IMR-90 (cell line): ENCODE measurements at regions of chr11 and their contacts with region 1.

Region 1: DNA sequence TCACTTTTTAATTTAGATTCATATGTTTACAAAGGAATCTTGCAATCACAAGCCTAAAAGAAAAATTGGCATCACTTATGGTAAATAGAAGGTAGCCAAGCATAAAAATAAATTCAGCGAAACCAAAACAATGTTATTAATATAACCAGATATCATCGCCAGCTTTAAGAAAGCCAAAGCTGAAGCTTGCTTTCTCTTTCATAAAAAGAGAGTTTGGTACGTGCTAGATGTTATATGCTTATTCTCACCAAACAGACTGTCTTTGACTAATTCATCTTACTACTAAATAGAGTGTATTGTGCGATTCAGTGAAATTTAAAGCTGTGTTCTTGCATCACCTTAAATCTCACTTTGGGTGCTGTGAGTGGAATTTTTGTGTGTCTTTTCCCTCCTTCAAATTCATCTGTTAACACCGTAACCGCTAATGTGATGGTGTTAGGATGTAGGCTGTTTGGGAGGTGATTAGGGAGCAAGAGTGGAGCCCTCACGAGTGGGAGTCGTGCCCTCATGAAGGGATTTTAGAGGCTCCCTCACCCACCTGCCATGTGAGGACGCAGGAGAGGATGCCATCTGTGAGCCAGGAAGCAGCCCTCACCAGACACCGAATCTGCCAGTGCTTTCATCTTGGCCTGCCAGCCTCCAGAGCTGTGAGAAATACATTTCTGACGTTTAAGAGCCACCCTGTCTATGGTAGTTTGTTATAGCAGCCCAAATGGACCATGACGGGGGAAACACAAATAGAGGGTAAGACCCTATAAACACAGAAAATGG is 134.1 kb upstream of the TMEM45B start:
- DNase-seq: no peak
- ATAC-seq: no peak
- H3K4me3 ChIP-seq: no peak overlapping the region
- H3K27ac ChIP-seq: no peak overlapping the region
- H3K4me1 ChIP-seq: no peaks in the 10 kb centered on the region
- H3K27me3 ChIP-seq: no peaks in the 10 kb centered on the region; the same call in 1 of the 2 replicates
- CTCF ChIP-seq: no peak
- POLR2A ChIP-seq: no peak
- RAD21 ChIP-seq: no peak

Region 2: DNA sequence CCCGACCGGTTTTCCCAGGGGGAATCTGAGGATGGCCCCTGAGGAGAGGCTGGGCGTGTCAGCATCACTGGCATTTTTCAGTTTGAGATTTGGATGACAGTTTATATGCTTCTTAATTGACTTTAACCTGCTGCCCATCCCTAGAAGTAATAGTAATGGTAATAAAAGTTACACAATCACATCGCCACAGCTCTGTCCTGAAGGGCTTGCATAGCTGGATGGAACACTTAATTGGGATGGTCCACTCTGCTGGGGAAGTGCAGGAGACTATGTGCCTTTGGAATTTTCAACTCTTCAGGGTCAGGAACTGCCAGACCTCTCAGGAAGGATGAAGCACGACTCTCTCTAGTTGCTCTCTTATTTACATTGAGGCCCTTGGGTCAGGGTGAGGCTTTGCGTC is 289.7 kb before region 1 on chr11:
- CTCF ChIA-PET with region 1: no interaction called
- POLR2A ChIA-PET with region 1: no interaction called
- dilution Hi-C with region 1: no loop called
- in situ Hi-C with region 1: no loop called
- intact Hi-C with region 1: loop called (anchors 10 kb)
- DNase-seq: no peak
- ATAC-seq: no peak
- H3K4me3 ChIP-seq: no peak overlapping the region
- H3K27ac ChIP-seq: no peak overlapping the region
- H3K4me1 ChIP-seq: no peaks in the 10 kb centered on the region
- H3K27me3 ChIP-seq: peaks cover 2% of the 10 kb centered on the region; the same call in 1 of the 2 replicates
- CTCF ChIP-seq: no peak
- POLR2A ChIP-seq: no peak
- RAD21 ChIP-seq: no peak

Region 3: GRCh38 chr11:129611661-129612446 is 69.7 kb before region 1 on chr11:
- CTCF ChIA-PET with region 1: no interaction called
- POLR2A ChIA-PET with region 1: no interaction called
- dilution Hi-C with region 1: no loop called
- in situ Hi-C with region 1: loop called (anchors 10 kb)
- intact Hi-C with region 1: no loop called
- DNase-seq: no peak
- ATAC-seq: no peak
- H3K4me3 ChIP-seq: no peak overlapping the region
- H3K27ac ChIP-seq: no peak overlapping the region
- H3K4me1 ChIP-seq: no peaks in the 10 kb centered on the region
- H3K27me3 ChIP-seq: peaks cover 10% of the 10 kb centered on the region
- CTCF ChIP-seq: no peak
- POLR2A ChIP-seq: no peak
- RAD21 ChIP-seq: no peak

Region 4: DNA sequence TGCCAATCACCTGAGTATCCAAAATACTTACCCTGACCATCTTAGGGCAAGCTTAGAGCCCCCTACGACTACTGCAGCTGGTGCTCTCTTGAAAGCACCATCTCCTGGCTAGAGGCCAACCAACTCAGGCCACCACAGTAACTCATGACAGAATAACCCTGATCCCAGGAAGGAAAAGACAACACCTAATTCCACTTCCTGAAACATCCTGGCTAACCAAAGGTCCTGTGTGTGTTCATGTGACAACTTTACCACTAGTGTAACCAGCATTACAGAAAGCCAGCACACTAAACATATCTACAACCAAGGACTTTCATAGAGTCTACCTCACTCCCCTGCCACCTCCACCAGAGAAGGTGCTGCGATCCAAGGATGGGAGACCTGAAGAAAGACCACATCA is 116.7 kb after region 1 on chr11:
- CTCF ChIA-PET with region 1: no interaction called
- POLR2A ChIA-PET with region 1: no interaction called
- dilution Hi-C with region 1: no loop called
- in situ Hi-C with region 1: no loop called
- intact Hi-C with region 1: no loop called
- DNase-seq: no peak
- ATAC-seq: no peak
- H3K4me3 ChIP-seq: no peak overlapping the region
- H3K27ac ChIP-seq: no peak overlapping the region
- H3K4me1 ChIP-seq: no peaks in the 10 kb centered on the region
- H3K27me3 ChIP-seq: 0 out of 2 replicates have a peak, but pooled peaks cover 2% of the 10 kb centered on the region
- CTCF ChIP-seq: no peak
- POLR2A ChIP-seq: no peak
- RAD21 ChIP-seq: no peak